ENCODE measurements at regions of chr5 and their contacts with region 1.

Region 1: DNA sequence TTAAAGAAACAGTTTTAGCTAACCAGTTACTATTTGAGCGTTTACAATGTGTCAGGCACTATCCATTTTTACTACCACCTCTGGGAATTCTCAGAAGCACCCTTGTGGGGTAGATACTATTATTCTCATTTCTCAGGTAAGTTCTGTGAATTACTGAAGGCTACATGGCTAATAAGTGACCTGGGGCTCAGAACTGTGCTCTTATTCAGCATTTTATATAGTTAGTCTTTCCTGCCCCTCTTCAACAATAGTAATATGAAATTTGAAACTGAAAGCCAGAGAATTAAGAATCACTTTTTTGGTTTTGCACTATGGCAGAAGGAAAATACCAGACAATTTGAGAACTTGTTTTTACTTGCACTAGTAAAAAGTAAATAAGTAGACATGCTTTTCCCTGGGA is 11.8 kb downstream of the ELL2 start:
- DNase-seq: no peak

Region 2: GRCh38 chr5:95892780-95893354 is 56.9 kb before region 1 on chr5:
- intact Hi-C with region 1: loop called (anchors 2 kb)
- DNase-seq: no peak

Region 3: DNA sequence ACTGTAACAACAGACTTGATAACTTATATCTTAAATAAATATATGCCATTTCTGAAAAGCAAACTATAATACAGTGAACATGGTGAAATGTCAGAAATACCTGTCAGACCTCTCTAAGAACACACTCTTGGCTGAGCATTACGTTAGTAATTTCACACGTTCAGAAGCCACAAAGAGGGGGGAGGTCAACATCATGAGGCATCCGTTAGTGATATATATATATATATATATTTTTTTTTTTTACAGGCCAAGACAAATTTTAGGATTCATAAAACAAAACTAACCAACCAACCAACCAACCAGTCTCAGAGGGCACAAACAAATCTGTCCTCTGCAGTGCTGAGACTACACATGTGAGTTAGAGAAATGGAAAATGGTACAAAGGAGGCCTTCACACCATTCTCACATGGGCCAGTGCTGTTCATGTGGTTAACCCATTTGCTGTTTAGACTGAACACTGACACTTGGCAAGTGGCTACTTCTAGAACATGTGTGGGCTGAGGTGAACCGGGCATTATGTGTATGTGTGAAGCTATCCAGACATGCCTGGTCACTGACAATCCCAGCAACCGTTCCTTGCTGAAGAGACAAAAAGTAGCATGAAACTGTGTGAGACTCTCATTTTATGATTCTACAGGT is 42.6 kb before region 1 on chr5:
- intact Hi-C with region 1: loop called (anchors 5 kb)
- DNase-seq: no peak

Region 4: GRCh38 chr5:95986937-95987520 is 37.2 kb after region 1 on chr5:
- intact Hi-C with region 1: no loop called
- DNase-seq: no peak

Region 5: GRCh38 chr5:96079075-96079474 is 129.3 kb after region 1 on chr5:
- intact Hi-C with region 1: no loop called
- DNase-seq: no peak

Measured in cardiac septum (tissue), 1 donor.